ENCODE measurements at regions of chr7 and their contacts with region 1.

Region 1: GRCh38 chr7:27196287-27196767 is 3.6 kb downstream of the HOXA13 start:
- DNase-seq: peak; percentile 88
- H3K4me3 Mint-ChIP-seq: peak overlapping the region; percentile 26
- H3K27ac Mint-ChIP-seq: no peak overlapping the region
- H3K4me1 Mint-ChIP-seq: peaks cover 30% of the 10 kb centered on the region
- H3K27me3 Mint-ChIP-seq: peaks cover 71% of the 10 kb centered on the region

Region 2: DNA sequence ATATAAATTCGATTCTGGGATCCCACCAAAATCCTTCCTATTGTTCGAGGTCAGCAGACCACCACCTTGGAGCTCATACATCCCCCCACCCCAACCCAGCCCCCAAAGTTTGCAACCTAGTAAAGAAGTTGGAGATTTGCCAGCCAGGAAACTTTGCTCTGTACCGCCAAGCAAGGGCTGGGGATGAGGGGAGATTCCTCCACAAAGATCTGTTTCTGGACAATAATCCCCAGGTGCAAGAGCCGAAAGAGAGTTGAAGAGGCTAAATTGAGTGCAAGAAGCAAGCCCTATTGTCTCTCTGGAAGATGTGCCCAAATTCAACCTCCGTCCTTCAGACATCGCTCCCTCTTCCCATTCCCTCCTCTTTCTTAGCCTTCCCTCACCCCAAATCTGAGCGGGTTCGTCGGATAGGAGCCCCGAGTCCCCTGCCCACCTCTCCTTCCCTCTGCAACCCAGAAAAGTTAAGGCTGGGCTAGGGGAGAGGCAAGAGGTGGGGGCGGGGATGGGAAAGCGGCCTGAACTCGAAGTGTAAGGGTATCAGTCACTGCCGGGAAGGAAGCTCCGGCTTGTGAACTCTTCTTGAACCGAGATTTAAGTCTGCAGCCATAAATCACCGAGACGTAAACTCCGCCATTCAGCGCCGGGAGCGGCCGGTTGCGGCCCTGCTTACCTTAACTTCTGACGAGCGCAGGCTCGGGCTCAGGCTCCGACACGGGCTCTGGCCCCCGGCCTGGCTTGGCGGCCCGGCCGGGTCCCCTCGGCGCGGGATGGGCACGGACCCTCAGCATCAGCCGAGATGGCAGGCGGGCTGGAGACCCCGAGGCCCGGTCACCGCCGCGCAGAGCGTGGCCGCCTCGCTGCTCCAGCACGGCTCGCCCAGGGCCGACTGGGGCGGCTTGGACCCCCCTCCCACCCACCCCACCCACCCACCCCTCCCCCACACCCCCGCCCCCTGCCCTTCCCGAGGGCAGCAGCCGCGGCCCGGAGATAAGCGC is 83.1 kb before region 1 on chr7:
- CTCF ChIA-PET with region 1: no interaction called
- POLR2A ChIA-PET with region 1: no interaction called
- intact Hi-C with region 1: no loop called
- DNase-seq: no peak
- H3K4me3 Mint-ChIP-seq: no peak overlapping the region
- H3K27ac Mint-ChIP-seq: no peak overlapping the region
- H3K4me1 Mint-ChIP-seq: no peaks in the 10 kb centered on the region
- H3K27me3 Mint-ChIP-seq: peaks cover 6% of the 10 kb centered on the region

Region 3: DNA sequence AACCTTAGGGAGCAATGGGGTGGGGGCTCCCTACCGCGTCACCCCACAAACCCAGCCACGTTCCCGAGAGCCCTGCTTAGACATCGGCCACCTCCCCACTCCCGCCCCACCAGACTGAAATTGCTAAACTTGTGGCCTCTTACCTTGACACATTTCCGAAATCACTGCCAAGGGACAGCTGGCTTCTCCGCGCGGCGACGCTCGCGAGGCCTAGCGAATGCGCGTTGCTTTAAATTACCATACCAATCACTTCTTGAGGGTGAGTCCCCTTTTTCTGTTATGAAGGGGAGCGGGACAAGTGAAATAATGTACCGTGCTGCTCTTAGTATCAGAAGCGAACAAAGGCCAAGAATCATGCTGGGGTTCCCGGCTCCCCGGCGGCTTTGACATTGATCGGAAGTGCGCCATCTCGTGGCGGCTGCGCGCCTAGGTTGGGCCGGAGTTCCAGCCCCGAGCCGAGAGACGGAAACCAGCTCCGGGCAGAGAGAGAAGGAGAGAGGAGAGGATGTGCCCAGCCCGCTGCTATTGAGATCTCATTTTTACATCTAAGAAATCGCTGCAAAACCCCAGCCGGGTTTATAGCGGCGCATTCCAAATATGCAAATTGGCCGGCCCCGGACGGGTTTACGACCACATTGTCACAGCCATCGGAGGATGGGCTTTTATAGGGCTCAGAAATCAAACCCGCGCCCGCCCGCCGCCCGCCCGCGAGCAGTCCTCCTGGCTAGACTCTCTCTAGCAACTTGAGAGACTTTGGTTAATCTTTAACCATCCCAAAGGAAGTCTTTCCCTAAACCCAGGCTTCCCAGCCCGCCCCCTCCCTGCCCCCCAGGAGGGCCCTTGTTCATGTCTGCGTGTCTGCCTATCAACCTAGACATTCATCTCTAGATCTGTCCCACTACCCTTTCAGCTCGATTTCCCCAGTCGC is 16.6 kb before region 1 on chr7:
- CTCF ChIA-PET with region 1: interaction called, 45 read pairs
- POLR2A ChIA-PET with region 1: interaction called, 3 read pairs
- intact Hi-C with region 1: loop called (anchors 2 kb)
- DNase-seq: peak; percentile 68
- H3K4me3 Mint-ChIP-seq: no peak overlapping the region
- H3K27ac Mint-ChIP-seq: no peak overlapping the region
- H3K4me1 Mint-ChIP-seq: peaks cover 13% of the 10 kb centered on the region
- H3K27me3 Mint-ChIP-seq: peaks cover 69% of the 10 kb centered on the region

Region 4: GRCh38 chr7:27242555-27243339 is 46.4 kb after region 1 on chr7 and contains the start of gene EVX1:
- CTCF ChIA-PET with region 1: interaction called, 19 read pairs
- POLR2A ChIA-PET with region 1: no interaction called
- intact Hi-C with region 1: loop called (anchors 2 kb)
- DNase-seq: peak; percentile 69
- H3K4me3 Mint-ChIP-seq: peak within 1 kb of the TSS; percentile 45
- H3K27ac Mint-ChIP-seq: peak within 1 kb of the TSS; percentile 5
- H3K4me1 Mint-ChIP-seq: peaks cover 25% of the 10 kb centered on the region
- H3K27me3 Mint-ChIP-seq: peaks cover 79% of the 10 kb centered on the region
- total RNA-seq, gene EVX1: not detected

Region 5: DNA sequence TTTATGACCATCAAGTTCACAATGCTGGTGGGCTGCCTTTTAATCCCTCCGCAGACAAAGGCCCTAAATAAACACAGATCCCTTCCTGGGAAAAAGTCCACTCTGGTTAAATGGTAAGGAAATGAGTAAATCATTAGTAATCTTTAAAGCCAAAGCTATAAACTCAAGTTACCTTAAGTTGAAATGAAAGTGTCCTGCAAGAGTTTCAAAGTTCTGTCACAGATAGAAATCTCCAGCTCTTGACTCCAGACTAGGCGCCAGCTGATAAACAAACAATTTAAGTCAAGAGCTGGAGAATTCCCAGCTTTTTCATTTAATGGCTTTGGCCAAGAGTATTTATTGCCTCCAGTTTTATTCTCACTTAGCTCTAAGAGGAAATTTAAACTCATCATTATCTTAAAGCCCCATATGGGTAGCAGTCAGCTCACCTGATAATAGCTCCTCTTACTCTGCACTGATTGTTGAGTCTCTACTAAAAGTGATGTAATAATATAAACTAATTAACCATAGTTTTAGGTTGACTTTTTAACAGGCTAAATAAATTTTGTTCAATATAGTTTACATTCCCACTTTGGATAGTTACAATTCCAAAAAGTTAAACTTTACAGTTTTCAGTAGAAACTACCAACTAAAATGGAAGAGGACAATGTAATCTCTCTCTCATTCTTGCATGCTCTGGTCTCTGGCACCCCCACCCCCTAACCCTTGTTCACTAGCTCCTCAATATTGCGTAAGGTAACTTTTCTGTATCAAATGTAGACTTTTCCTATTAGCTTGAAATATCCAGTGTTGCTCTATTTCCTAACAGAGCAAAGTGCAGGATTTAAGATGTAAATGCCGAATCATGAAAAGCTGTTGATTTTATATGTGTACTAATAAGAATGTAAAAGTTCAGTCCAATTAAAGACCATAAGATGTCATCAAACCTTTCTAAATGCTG is 410.2 kb after region 1 on chr7:
- CTCF ChIA-PET with region 1: interaction called, 11 read pairs
- POLR2A ChIA-PET with region 1: no interaction called
- intact Hi-C with region 1: no loop called
- DNase-seq: no peak
- H3K4me3 Mint-ChIP-seq: no peak overlapping the region
- H3K27ac Mint-ChIP-seq: no peak overlapping the region
- H3K4me1 Mint-ChIP-seq: no peaks in the 10 kb centered on the region
- H3K27me3 Mint-ChIP-seq: no peaks in the 10 kb centered on the region

Region 6: GRCh38 chr7:27921081-27921836 is 724.9 kb after region 1 on chr7:
- CTCF ChIA-PET with region 1: interaction called, 23 read pairs
- POLR2A ChIA-PET with region 1: no interaction called
- intact Hi-C with region 1: loop called (anchors 2 kb)
- DNase-seq: no peak
- H3K4me3 Mint-ChIP-seq: no peak overlapping the region
- H3K27ac Mint-ChIP-seq: no peak overlapping the region
- H3K4me1 Mint-ChIP-seq: no peaks in the 10 kb centered on the region
- H3K27me3 Mint-ChIP-seq: no peaks in the 10 kb centered on the region

Region 7: DNA sequence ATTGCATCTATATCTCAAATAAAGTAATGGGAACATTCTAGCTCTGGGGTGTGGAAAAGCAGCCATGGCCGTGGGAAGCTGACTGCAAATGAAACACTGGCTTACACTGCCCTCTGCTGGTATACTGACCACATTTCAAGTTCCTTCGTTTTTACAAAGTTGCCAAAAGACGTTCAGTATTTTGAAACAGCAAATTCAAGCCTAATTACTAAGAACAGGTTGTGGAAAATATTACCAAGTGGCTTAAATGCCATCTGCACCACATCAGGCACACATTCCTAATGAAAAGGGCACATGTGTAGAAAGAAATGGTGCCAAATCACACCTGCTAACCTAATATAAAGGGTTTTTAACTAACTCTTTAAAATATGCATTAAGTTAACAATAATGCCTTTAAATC is 900.4 kb after region 1 on chr7:
- CTCF ChIA-PET with region 1: interaction called, 11 read pairs
- POLR2A ChIA-PET with region 1: no interaction called
- intact Hi-C with region 1: loop called (anchors 1 kb)
- DNase-seq: peak; percentile 42
- H3K4me3 Mint-ChIP-seq: no peak overlapping the region
- H3K27ac Mint-ChIP-seq: no peak overlapping the region
- H3K4me1 Mint-ChIP-seq: peaks cover 5% of the 10 kb centered on the region
- H3K27me3 Mint-ChIP-seq: no peaks in the 10 kb centered on the region